HEK293T (cell line): ENCODE measurements at regions of chr3 and their contacts with region 1.

Region 1: GRCh38 chr3:141875374-141875892 is 1.0 kb upstream of the ATP1B3 start:
- DNase-seq: peak; percentile 81

Region 2: DNA sequence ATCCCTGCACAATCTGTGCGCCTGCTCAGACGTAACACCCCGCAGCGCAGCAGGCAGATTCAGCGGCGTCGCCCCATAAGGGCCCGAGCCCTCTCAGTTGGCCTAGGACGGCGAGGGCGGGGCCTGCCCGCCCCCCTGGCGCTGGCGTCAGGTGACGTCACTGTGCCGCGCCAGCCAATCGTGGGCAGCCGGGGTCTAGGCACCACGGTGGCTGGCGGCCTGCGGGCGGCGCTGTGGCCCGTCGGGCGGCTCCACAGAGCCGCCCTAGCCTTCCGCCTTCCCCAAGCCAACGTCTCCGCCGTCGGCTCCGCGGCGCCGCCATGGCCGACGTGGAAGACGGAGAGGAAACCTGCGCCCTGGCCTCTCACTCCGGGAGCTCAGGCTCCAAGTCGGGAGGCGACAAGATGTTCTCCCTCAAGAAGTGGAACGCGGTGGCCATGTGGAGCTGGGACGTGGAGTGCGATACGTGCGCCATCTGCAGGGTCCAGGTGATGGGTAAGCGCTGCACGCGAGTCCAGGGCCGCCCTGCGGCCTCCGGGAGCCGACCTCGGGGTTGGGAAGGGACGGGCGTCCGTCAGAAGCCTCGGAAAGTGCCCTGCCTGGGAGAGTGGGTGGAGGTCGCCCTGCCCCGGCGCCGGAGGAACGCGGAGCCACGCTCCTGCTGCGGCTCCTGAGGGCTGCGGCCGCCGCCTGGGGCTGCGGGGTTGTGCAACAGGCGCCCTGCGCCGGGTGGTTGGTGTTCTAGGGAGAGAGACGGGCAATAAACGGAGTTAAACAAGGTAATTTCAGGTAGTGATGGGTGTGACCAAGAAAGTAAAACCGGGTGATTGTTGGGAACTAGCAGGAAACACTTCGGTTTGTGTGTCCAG is 137.2 kb before region 1 on chr3 and contains the start of gene RNF7:
- CTCF ChIA-PET with region 1: interaction called, 6 read pairs
- POLR2A ChIA-PET with region 1: interaction called, 11 read pairs
- DNase-seq: peak; percentile 98